ENCODE measurements at regions of chr9 and their contacts with region 1.

Region 1: DNA sequence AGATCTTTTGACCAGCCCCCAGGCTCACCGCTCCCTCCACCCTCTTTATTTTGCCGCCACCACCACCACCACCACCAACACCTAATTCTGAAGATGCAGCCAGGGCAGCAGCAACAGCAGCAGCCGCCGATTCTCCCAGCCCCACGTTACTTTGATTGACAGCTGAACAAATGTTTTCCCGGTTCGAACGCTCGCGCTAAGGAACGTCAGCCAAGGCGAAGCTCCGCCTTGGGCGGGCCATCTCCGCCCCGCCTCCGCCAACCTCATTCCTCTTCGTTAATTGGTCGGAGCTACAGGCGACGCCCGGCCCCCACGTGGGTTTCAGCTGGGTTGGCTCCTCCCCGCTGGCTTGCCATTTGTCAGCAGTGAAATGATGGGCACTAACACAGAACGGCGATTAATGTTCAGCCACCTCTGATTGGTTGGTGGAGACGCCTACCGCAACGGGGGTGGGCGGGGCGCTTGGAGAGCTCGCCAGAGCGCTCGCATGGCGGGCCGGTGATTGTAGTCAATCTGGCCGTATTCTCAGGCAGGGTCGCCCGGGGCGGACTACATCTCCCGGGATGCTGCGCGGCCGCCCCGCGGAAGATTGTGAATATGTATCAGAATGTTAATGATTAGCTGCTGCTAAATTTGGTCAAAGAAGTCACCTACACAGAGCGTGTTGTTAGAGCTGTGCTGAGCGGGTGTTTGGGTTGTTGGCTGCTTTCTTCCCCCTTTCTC is at the start of gene TLE4:
- DNase-seq: peak; percentile 100
- ATAC-seq: peak; percentile 96
- total RNA-seq, gene TLE4: 12.8 TPM

Region 2: GRCh38 chr9:79026316-79026715 is 545.2 kb before region 1 on chr9:
- intact Hi-C with region 1: no loop called
- DNase-seq: no peak
- ATAC-seq: no peak

Region 3: DNA sequence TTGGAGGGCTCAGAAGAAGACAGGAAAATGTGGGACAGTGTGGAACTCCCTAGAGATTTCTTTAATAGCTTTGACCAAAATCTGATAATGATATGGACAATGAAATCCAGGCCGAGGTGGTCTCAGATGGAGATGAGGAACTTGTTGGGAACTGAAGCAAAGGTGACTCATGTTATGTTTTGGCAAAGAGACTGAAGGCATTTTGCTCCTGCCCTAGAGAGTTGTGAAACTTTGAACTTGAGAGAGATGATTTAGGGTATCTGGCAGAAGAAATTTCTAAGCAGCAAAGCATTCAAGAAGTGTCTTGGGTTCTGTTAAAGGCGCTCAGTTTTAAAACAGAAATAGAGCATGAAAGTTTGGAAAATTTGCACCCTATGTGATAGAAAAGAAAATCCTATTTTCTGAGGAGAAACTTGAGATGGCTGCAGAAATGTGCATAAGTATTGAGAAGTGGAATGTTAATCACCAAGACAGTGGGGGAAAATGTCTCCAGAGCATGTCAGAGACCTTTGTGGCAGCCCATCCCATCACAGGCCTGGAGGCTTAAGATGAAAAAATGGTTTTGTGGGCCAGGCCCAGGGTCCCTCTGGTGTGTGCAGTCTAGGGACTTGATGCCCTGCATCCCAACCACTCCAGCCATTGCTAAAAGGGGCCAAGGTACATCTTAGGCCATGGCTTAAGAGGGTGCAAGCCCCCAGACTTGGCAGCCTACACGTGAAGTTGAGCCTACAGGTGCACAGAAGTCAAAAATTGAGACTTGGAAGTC is 463.4 kb before region 1 on chr9:
- intact Hi-C with region 1: no loop called
- DNase-seq: no peak
- ATAC-seq: no peak

Region 4: GRCh38 chr9:79610791-79611614 is 39.5 kb after region 1 on chr9:
- intact Hi-C with region 1: no loop called
- DNase-seq: no peak
- ATAC-seq: peak; percentile 66

Region 5: GRCh38 chr9:79662537-79662956 is 91.1 kb after region 1 on chr9:
- intact Hi-C with region 1: loop called (anchors 10 kb)
- DNase-seq: no peak
- ATAC-seq: no peak

Region 6: GRCh38 chr9:79858508-79858907 is 287.0 kb after region 1 on chr9:
- intact Hi-C with region 1: no loop called
- DNase-seq: no peak
- ATAC-seq: no peak